ENCODE measurements at regions of chr21 and their contacts with region 1.

Region 1: DNA sequence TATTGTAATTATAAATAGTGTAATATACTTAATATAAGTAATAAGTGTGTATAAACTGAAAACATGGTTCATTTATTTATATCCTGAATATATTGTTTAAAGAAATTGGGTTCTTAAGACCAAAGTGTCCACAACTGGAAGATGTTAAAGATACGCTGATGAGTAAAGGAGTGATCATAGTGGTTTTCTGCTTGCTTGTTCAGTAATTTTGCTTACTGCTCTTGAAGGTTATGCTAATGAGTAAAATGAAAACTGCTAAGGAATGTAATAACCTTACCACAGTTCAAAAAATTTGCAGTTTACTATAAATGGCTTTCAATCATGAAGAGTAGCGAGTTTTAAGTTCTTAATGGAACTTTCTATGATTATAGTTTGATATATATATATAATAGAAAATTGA is 22.0 kb downstream of the DONSON start:
- DNase-seq: no peak
- ATAC-seq: no peak
- H3K4me3 ChIP-seq: no peak overlapping the region
- H3K4me3 Mint-ChIP-seq: no peak overlapping the region
- H3K27ac ChIP-seq: no peak overlapping the region
- H3K27ac Mint-ChIP-seq: peak overlapping the region in 3 of 9 donors; percentile 25 to 38 (median 31)
- H3K4me1 ChIP-seq: no peaks in the 10 kb centered on the region
- H3K4me1 Mint-ChIP-seq: peaks cover 11 to 53% (median 32%) of the 10 kb centered on the region in 7 donors
- H3K27me3 ChIP-seq: no peaks in the 10 kb centered on the region
- H3K27me3 Mint-ChIP-seq: no peaks in the 10 kb centered on the region

Region 2: GRCh38 chr21:33552093-33552998 is 14.2 kb before region 1 on chr21:
- CTCF ChIA-PET with region 1: interaction called, 5 read pairs
- POLR2A ChIA-PET with region 1: interaction called, 5 read pairs
- intact Hi-C with region 1: loop called in 1 of 2 experiments (anchors 2 kb)
- DNase-seq: no peak
- ATAC-seq: peak; percentile 21
- H3K4me3 ChIP-seq: no peak overlapping the region
- H3K4me3 Mint-ChIP-seq: peak overlapping the region in 2 of 10 donors; percentile 0 to 2
- H3K27ac ChIP-seq: no peak overlapping the region
- H3K27ac Mint-ChIP-seq: peak overlapping the region in 4 of 9 donors; percentile 33 to 90 (median 46)
- H3K4me1 ChIP-seq: peaks cover 6 to 12% of the 10 kb centered on the region in 2 donors
- H3K4me1 Mint-ChIP-seq: peaks cover 43 to 74% (median 58%) of the 10 kb centered on the region in 7 donors
- H3K27me3 ChIP-seq: no peaks in the 10 kb centered on the region
- H3K27me3 Mint-ChIP-seq: no peaks in the 10 kb centered on the region

Region 3: GRCh38 chr21:33703750-33704606 is 137.5 kb after region 1 on chr21:
- CTCF ChIA-PET with region 1: no interaction called
- POLR2A ChIA-PET with region 1: no interaction called
- intact Hi-C with region 1: no loop called
- DNase-seq: peak in 1 of 9 donors; percentile 2
- ATAC-seq: no peak
- H3K4me3 ChIP-seq: peak overlapping the region; percentile 31
- H3K4me3 Mint-ChIP-seq: peak overlapping the region in 5 of 10 donors; percentile 34 to 62 (median 46)
- H3K27ac ChIP-seq: no peak overlapping the region
- H3K27ac Mint-ChIP-seq: peak overlapping the region in 8 of 9 donors; percentile 5 to 75 (median 60)
- H3K4me1 ChIP-seq: peaks cover 0 to 9% of the 10 kb centered on the region in 2 donors
- H3K4me1 Mint-ChIP-seq: peaks cover 0 to 13% (median 12%) of the 10 kb centered on the region in 7 donors
- H3K27me3 ChIP-seq: no peaks in the 10 kb centered on the region
- H3K27me3 Mint-ChIP-seq: peaks cover 0 to 2% (median 0%) of the 10 kb centered on the region in 5 donors

Region 4: DNA sequence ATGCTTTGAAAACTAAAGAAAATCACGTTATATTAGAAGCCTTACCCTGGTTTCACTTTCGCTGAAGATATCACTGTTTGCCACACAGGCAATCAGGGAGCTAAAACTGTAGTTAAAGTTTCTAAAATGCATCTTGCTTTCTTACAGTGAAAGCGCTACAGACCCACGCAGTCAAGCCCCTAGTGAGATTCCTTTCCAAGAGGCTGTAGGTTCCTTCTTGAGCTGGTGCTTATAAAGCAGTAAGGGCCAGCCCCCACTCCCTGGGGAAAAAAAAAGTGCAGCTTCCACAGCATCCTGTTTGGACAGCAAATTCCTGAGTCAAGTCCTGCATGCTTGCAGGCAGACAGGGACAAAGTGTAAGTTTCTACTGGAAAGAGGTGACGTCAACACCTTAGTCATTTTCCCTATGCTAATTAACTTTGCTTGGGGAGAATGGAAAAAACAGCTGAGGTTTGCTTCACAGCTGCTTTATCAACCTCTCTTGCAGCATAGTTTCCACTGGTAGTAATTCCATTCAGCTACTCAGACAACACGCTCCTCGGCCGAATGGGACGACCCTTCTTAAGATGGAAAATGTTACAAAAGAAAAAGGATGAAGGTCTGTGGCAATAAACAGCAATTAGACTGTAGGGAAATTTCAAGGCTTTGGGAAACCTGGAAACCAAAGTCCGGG is 960.2 kb after region 1 on chr21:
- CTCF ChIA-PET with region 1: no interaction called
- POLR2A ChIA-PET with region 1: no interaction called
- intact Hi-C with region 1: no loop called
- DNase-seq: peak in 3 of 9 donors; percentile 2 to 44 (median 10)
- ATAC-seq: no peak
- H3K4me3 ChIP-seq: peak overlapping the region; percentile 40
- H3K4me3 Mint-ChIP-seq: peak overlapping the region; percentile 44 to 80 (median 65)
- H3K27ac ChIP-seq: peak overlapping the region; percentile 36
- H3K27ac Mint-ChIP-seq: peak overlapping the region in 8 of 9 donors; percentile 11 to 86 (median 73)
- H3K4me1 ChIP-seq: no peaks in the 10 kb centered on the region
- H3K4me1 Mint-ChIP-seq: peaks cover 0 to 14% (median 10%) of the 10 kb centered on the region in 7 donors
- H3K27me3 ChIP-seq: no peaks in the 10 kb centered on the region
- H3K27me3 Mint-ChIP-seq: no peaks in the 10 kb centered on the region